ENCODE measurements at regions of chr5 and their contacts with region 1.

Region 1: GRCh38 chr5:77816671-77817070 is 40.5 kb upstream of the TBCA start:
- DNase-seq: no peak
- H3K4me3 ChIP-seq: no peak overlapping the region
- H3K27ac ChIP-seq: no peak overlapping the region
- H3K4me1 ChIP-seq: no peaks in the 10 kb centered on the region
- H3K27me3 ChIP-seq: no peaks in the 10 kb centered on the region; a peak in 1 of 7 replicates
- CTCF ChIP-seq: no peak
- EP300 ChIP-seq: no peak
- POLR2A ChIP-seq: no peak
- RAD21 ChIP-seq: no peak

Region 2: DNA sequence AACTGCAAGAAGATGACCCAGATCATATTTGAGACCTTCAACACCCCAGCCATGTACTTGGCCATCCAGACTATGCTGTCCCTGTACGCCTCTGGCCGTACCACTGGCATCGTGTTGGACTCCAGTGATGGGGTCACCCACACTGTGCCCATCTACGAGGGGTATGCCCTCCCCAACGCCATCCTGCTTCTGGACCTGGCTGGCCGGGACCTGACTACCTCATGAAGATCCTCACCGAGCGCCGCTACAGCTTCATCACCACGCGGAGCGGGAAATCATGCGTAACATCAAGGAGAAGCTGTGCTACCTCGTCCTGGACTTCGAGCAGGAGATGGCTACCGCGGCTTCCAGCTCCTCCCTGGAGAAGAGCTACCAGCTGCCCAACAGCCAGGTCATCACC is 31.4 kb before region 1 on chr5:
- CTCF ChIA-PET with region 1: no interaction called
- POLR2A ChIA-PET with region 1: no interaction called
- DNase-seq: no peak
- H3K4me3 ChIP-seq: no peak overlapping the region
- H3K27ac ChIP-seq: no peak overlapping the region
- H3K4me1 ChIP-seq: no peaks in the 10 kb centered on the region
- H3K27me3 ChIP-seq: no peaks in the 10 kb centered on the region
- CTCF ChIP-seq: no peak
- EP300 ChIP-seq: no peak
- POLR2A ChIP-seq: no peak
- RAD21 ChIP-seq: no peak

Region 3: DNA sequence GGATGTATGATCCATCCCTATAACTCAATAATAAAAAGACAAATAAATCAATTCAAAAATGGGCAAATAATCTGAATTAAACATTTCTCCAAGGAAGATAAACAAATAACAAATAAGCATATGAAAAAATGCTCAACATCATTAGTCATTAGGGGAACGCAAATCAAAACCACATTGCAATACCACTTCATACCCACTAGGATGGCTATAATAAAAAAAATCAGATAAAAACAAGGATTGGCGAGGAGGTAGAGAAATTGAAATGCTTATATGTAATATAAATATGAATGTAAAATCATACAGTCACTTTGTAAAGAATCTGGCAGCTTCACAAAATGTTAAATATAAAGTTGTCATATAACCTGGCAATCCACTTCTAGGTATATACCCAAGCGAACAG is 11.8 kb after region 1 on chr5:
- CTCF ChIA-PET with region 1: interaction called, 12 read pairs
- POLR2A ChIA-PET with region 1: interaction called, 3 read pairs
- DNase-seq: no peak
- H3K4me3 ChIP-seq: no peak overlapping the region
- H3K27ac ChIP-seq: no peak overlapping the region
- H3K4me1 ChIP-seq: peaks cover 0 to 5% (median 1%) of the 10 kb centered on the region in 4 experiments; a peak in 3 of 7 replicates
- H3K27me3 ChIP-seq: no peaks in the 10 kb centered on the region; a peak in 2 of 7 replicates
- CTCF ChIP-seq: no peak
- EP300 ChIP-seq: no peak
- POLR2A ChIP-seq: no peak
- RAD21 ChIP-seq: no peak

Measured in H1 (cell line).